Gastrocnemius medialis (tissue), 4 donors: ENCODE measurements at regions of chr10 and their contacts with region 1.

Region 1: GRCh38 chr10:45008524-45009161 is 7.9 kb downstream of the ZNF22 start:
- DNase-seq: no peak
- ATAC-seq: peak; percentile 85 to 89
- H3K4me3 ChIP-seq: no peak overlapping the region
- H3K27ac ChIP-seq: no peak overlapping the region
- H3K4me1 ChIP-seq: peaks cover 0 to 5% of the 10 kb centered on the region in 2 donors
- H3K27me3 ChIP-seq: no peaks in the 10 kb centered on the region
- CTCF ChIP-seq: peak; percentile 55 to 80 (median 73)
- POLR2A ChIP-seq: no peak

Region 2: GRCh38 chr10:45198596-45199379 is 190.1 kb after region 1 on chr10:
- in situ Hi-C with region 1: no loop called
- intact Hi-C with region 1: no loop called
- DNase-seq: no peak
- ATAC-seq: no peak
- H3K4me3 ChIP-seq: no peak overlapping the region
- H3K27ac ChIP-seq: no peak overlapping the region
- H3K4me1 ChIP-seq: no peaks in the 10 kb centered on the region
- H3K27me3 ChIP-seq: no peaks in the 10 kb centered on the region
- CTCF ChIP-seq: no peak
- POLR2A ChIP-seq: no peak

Region 3: DNA sequence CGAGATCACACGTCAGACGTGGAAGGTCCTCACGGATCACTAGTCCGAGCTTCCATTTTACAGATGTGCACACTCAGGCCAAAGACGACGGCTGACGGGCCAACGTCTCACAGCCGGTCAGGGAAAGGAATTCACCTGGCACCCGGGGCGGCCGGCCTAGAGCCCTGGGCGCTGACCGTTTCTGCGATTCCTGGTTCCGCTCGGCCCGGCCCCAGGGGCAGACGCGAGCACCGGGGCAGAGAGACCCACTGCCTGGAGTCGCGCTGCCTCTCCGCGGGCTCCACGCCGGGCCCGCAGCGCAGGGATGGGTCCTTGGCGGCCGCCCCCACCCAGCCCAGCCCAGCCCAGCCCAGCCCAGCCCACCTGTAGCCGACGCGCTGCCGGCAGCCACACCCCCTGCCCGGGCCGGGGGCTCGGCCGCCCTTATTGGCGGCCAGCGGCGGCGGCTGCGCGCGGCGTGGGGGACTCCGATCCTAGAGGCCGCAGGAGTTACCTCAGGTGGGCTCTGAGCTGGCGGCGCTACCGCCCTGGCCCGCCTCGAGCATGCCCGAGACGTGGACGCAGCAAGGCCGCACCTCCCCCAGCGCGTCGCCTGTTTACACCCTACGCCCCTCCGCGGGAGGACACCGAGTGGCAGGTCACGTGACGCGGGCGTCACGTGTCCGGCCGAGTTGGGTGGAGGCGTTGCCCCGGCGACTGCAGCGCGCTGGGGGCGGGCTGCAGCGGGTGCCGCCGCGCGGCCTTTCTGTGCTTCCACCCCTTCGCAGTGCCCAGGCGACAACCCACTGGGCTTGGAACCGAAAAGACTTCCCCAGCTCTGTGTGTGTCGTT is 585.8 kb after region 1 on chr10:
- in situ Hi-C with region 1: no loop called
- intact Hi-C with region 1: loop called (anchors 10 kb)
- DNase-seq: peak; percentile 85 to 89
- ATAC-seq: peak; percentile 87 to 94
- H3K4me3 ChIP-seq: peak overlapping the region; percentile 80 to 83 (median 82)
- H3K27ac ChIP-seq: peak overlapping the region; percentile 69 to 88 (median 74)
- H3K4me1 ChIP-seq: peaks cover 21 to 22% of the 10 kb centered on the region in 2 donors
- H3K27me3 ChIP-seq: peaks cover 1 to 4% (median 2%) of the 10 kb centered on the region in 3 donors
- CTCF ChIP-seq: peak in 2 of 5 experiments; percentile 39 to 52
- POLR2A ChIP-seq: peak; percentile 28 to 77

Region 4: GRCh38 chr10:46022978-46023702 is 1014.5 kb after region 1 on chr10:
- in situ Hi-C with region 1: no loop called
- intact Hi-C with region 1: loop called (anchors 10 kb)
- DNase-seq: peak; percentile 85 to 92
- ATAC-seq: peak; percentile 88 to 93
- H3K4me3 ChIP-seq: peak overlapping the region; percentile 65 to 96 (median 72)
- H3K27ac ChIP-seq: peak overlapping the region; percentile 88 to 96 (median 90)
- H3K4me1 ChIP-seq: peaks cover 89 to 92% of the 10 kb centered on the region in 2 donors
- H3K27me3 ChIP-seq: no peaks in the 10 kb centered on the region
- CTCF ChIP-seq: peak in 4 of 5 experiments; percentile 11 to 58 (median 18)
- POLR2A ChIP-seq: peak; percentile 67 to 77